ENCODE measurements at regions of chr2 and their contacts with region 1.

Region 1: GRCh38 chr2:136207030-136207623 is 89.2 kb upstream of the CXCR4 start:
- DNase-seq: peak; percentile 68
- ATAC-seq: peak; percentile 79
- H3K4me3 ChIP-seq: no peak overlapping the region
- H3K27ac ChIP-seq: no peak overlapping the region
- H3K4me1 ChIP-seq: peaks cover 21% of the 10 kb centered on the region
- H3K27me3 ChIP-seq: no peaks in the 10 kb centered on the region; a peak in 1 of 4 replicates
- CTCF ChIP-seq: no peak
- EP300 ChIP-seq: peak; percentile 26 to 55; a peak in 2 of 4 replicates
- POLR2A ChIP-seq: no peak
- RAD21 ChIP-seq: 0 out of 2 replicates have a peak, but pooled peaks have one; percentile 0

Region 2: GRCh38 chr2:135904341-135904989 is 302.7 kb before region 1 on chr2:
- CTCF ChIA-PET with region 1: no interaction called
- POLR2A ChIA-PET with region 1: no interaction called
- RAD21 ChIA-PET with region 1: no interaction called
- SMC1A ChIA-PET with region 1: no interaction called
- in situ Hi-C with region 1: no loop called
- intact Hi-C with region 1: no loop called
- DNase-seq: no peak
- ATAC-seq: no peak; the same call in 2 of the 3 replicates
- H3K4me3 ChIP-seq: no peak overlapping the region
- H3K27ac ChIP-seq: no peak overlapping the region
- H3K4me1 ChIP-seq: no peaks in the 10 kb centered on the region
- H3K27me3 ChIP-seq: no peaks in the 10 kb centered on the region
- CTCF ChIP-seq: no peak
- EP300 ChIP-seq: no peak
- POLR2A ChIP-seq: no peak
- RAD21 ChIP-seq: no peak

Region 3: GRCh38 chr2:136117909-136118818 is 89.0 kb before region 1 on chr2 and contains the start of gene CXCR4:
- CTCF ChIA-PET with region 1: no interaction called
- POLR2A ChIA-PET with region 1: interaction called, 8 read pairs
- RAD21 ChIA-PET with region 1: interaction called, 16 read pairs
- SMC1A ChIA-PET with region 1: interaction called, 9 read pairs
- in situ Hi-C with region 1: no loop called
- intact Hi-C with region 1: loop called (anchors 5 kb)
- DNase-seq: no peak
- ATAC-seq: peak; percentile 43
- H3K4me3 ChIP-seq: peak within 1 kb of the TSS; percentile 85
- H3K27ac ChIP-seq: peak within 1 kb of the TSS; percentile 40; the same call in 1 of the 2 replicates
- H3K4me1 ChIP-seq: peaks cover 2% of the 10 kb centered on the region; the same call in 1 of the 2 replicates
- H3K27me3 ChIP-seq: peaks cover 0 to 12% of the 10 kb centered on the region in 2 experiments
- CTCF ChIP-seq: peak in 1 of 3 experiments; percentile 19; a peak in 1 of 6 replicates
- EP300 ChIP-seq: no peak
- POLR2A ChIP-seq: peak; percentile 97
- RAD21 ChIP-seq: 0 out of 2 replicates have a peak, but pooled peaks have one; percentile 9
- polyA plus RNA-seq, gene CXCR4: 31.1 to 32.3 TPM

Region 4: GRCh38 chr2:136225950-136226835 is 19.1 kb after region 1 on chr2:
- CTCF ChIA-PET with region 1: no interaction called
- POLR2A ChIA-PET with region 1: interaction called, 5 read pairs
- RAD21 ChIA-PET with region 1: interaction called, 19 read pairs
- SMC1A ChIA-PET with region 1: interaction called, 47 read pairs
- in situ Hi-C with region 1: no loop called
- intact Hi-C with region 1: no loop called
- DNase-seq: no peak
- ATAC-seq: peak; percentile 93
- H3K4me3 ChIP-seq: no peak overlapping the region
- H3K27ac ChIP-seq: no peak overlapping the region
- H3K4me1 ChIP-seq: no peaks in the 10 kb centered on the region; the same call in 1 of the 2 replicates
- H3K27me3 ChIP-seq: no peaks in the 10 kb centered on the region
- CTCF ChIP-seq: peak in 1 of 3 experiments; percentile 7; a peak in 1 of 6 replicates
- EP300 ChIP-seq: peak; percentile 96 to 97
- POLR2A ChIP-seq: no peak
- RAD21 ChIP-seq: 0 out of 2 replicates have a peak, but pooled peaks have one; percentile 3

Region 5: DNA sequence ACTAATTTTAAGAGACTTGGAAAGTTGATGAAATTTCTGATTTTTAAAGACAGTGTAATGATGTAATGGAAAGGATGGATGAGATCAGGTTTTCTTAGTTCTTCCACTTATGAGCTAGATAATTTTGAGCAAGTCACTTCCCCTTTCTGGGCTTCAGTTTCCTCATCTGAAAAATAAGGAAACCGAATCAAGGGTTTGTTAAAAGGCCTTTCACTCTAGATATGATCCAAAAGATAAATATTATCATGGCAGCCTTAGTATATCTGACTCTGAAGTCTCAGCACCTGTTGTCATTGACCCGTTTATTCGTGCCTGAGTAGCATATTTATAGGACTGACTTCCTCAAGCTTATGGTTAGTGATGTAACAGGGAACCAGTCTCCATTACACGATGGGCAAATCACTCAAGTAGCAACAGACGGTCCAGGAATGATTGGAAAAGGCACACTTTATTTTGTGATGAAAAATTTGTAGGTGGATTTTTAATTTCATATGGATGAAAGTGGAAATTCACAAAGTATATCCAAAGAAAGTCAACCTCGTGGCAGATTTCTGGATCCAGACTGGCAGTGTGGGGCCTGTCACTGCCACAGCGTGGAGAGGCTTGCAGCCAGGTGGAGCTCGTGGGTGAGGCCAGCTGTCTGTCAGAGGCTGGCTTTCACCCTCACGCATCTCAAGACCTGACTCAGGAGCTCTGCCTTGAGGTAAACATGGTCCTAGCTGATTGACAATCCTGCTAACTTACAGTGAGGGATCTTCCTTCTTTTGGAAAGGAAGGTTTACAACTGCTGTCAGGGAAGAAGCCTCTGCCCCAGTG is 48.7 kb after region 1 on chr2:
- CTCF ChIA-PET with region 1: interaction called, 11 read pairs
- POLR2A ChIA-PET with region 1: interaction called, 19 read pairs
- RAD21 ChIA-PET with region 1: interaction called, 69 read pairs
- SMC1A ChIA-PET with region 1: interaction called, 55 read pairs
- in situ Hi-C with region 1: no loop called
- intact Hi-C with region 1: loop called (anchors 2 kb)
- DNase-seq: no peak
- ATAC-seq: peak; percentile 78
- H3K4me3 ChIP-seq: no peak overlapping the region
- H3K27ac ChIP-seq: no peak overlapping the region
- H3K4me1 ChIP-seq: peaks cover 12% of the 10 kb centered on the region
- H3K27me3 ChIP-seq: no peaks in the 10 kb centered on the region; a peak in 1 of 4 replicates
- CTCF ChIP-seq: peak in 2 of 3 experiments; percentile 9 to 27; a peak in 3 of 6 replicates
- EP300 ChIP-seq: peak in 1 of 2 experiments; percentile 63; a peak in 1 of 4 replicates
- POLR2A ChIP-seq: no peak
- RAD21 ChIP-seq: no peak

Region 6: GRCh38 chr2:136319237-136319636 is 112.1 kb after region 1 on chr2:
- CTCF ChIA-PET with region 1: interaction called, 3 read pairs
- POLR2A ChIA-PET with region 1: interaction called, 4 read pairs
- RAD21 ChIA-PET with region 1: interaction called, 4 read pairs
- SMC1A ChIA-PET with region 1: interaction called, 12 read pairs
- in situ Hi-C with region 1: no loop called
- intact Hi-C with region 1: no loop called
- DNase-seq: no peak
- ATAC-seq: peak; percentile 81
- H3K4me3 ChIP-seq: no peak overlapping the region
- H3K27ac ChIP-seq: no peak overlapping the region
- H3K4me1 ChIP-seq: peaks cover 5% of the 10 kb centered on the region; the same call in 1 of the 2 replicates
- H3K27me3 ChIP-seq: no peaks in the 10 kb centered on the region
- CTCF ChIP-seq: no peak
- EP300 ChIP-seq: no peak
- POLR2A ChIP-seq: no peak
- RAD21 ChIP-seq: no peak

Region 7: DNA sequence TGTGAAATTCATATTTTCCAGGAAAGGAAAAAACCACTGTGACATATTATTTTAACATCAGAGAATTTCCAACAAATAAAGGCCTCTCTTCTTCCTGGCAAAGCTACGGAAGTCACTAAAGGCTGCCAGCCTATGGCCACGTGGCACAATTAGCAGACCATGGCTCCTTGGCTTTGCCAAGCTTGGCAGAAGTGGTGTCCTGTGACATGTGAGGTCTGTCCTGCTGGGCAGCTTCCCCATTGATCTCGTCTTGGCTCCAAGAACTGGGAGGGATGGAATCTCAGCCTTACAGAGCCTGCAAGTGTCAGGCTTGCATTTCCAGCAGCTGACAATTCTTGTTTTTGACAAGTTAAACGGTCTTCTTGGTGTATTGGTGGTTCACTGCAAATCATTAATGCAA is 331.4 kb after region 1 on chr2:
- CTCF ChIA-PET with region 1: no interaction called
- POLR2A ChIA-PET with region 1: no interaction called
- RAD21 ChIA-PET with region 1: no interaction called
- SMC1A ChIA-PET with region 1: no interaction called
- in situ Hi-C with region 1: no loop called
- intact Hi-C with region 1: no loop called
- DNase-seq: no peak
- ATAC-seq: no peak
- H3K4me3 ChIP-seq: no peak overlapping the region
- H3K27ac ChIP-seq: no peak overlapping the region
- H3K4me1 ChIP-seq: no peaks in the 10 kb centered on the region
- H3K27me3 ChIP-seq: no peaks in the 10 kb centered on the region; a peak in 1 of 4 replicates
- CTCF ChIP-seq: no peak
- EP300 ChIP-seq: no peak
- POLR2A ChIP-seq: no peak
- RAD21 ChIP-seq: no peak

Region 8: DNA sequence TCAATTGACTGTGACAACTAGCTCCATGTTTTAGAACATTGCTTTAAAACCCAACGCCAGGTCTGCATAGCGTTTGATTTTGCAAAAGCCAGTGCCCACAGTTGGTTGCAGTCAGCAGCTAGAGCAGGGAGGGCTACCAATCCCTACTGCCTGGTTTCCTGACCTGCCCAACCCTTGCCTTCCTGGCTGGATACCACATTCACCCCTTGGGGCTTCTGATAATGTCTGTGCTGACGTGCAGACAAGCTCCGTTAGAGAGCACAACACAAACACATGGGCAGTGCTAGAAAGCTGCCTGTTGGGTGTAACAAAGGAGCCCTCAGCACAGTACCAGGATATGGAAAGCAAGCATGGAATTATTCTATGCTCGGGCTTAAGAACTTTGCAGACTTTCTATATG is 486.8 kb after region 1 on chr2:
- CTCF ChIA-PET with region 1: no interaction called
- POLR2A ChIA-PET with region 1: no interaction called
- RAD21 ChIA-PET with region 1: no interaction called
- SMC1A ChIA-PET with region 1: no interaction called
- in situ Hi-C with region 1: no loop called
- intact Hi-C with region 1: no loop called
- DNase-seq: no peak
- ATAC-seq: no peak
- H3K4me3 ChIP-seq: no peak overlapping the region
- H3K27ac ChIP-seq: no peak overlapping the region
- H3K4me1 ChIP-seq: no peaks in the 10 kb centered on the region
- H3K27me3 ChIP-seq: no peaks in the 10 kb centered on the region
- CTCF ChIP-seq: no peak
- EP300 ChIP-seq: no peak
- POLR2A ChIP-seq: no peak
- RAD21 ChIP-seq: no peak

Region 9: DNA sequence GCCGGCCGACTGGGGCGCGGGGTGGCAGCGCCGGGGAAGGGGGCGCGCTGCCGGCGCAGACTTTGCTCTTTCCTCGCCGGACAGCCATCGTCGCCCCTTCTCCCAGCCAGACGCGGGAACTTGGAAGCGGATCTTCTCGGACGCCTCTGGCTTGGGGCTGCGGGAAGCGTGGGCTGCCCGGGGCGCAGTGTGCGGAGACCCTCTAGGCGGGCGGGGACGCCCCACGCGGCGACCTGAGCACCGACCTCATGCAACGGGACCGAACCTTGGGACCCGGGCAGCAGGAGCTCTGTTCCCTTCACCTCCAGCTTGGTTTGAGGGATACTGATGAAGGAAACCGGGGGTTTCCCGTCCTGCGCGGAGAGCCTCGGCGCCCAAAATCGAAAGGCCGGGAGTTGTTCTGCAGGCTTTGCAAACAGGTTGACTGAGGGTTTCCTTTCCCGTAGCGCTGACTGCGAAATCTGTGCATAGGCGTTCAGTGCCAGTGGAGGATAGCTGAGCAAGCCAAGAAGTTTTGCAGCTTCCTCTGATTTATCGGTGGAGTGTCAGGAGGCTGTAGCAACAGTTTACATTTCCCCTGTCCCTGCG is 558.7 kb after region 1 on chr2:
- CTCF ChIA-PET with region 1: no interaction called
- POLR2A ChIA-PET with region 1: no interaction called
- RAD21 ChIA-PET with region 1: no interaction called
- SMC1A ChIA-PET with region 1: no interaction called
- in situ Hi-C with region 1: no loop called
- intact Hi-C with region 1: no loop called
- DNase-seq: no peak
- ATAC-seq: peak; percentile 34; the same call in 2 of the 3 replicates
- H3K4me3 ChIP-seq: no peak overlapping the region
- H3K27ac ChIP-seq: no peak overlapping the region
- H3K4me1 ChIP-seq: no peaks in the 10 kb centered on the region
- H3K27me3 ChIP-seq: peaks cover 9 to 18% of the 10 kb centered on the region in 2 experiments
- CTCF ChIP-seq: no peak
- EP300 ChIP-seq: no peak
- POLR2A ChIP-seq: no peak
- RAD21 ChIP-seq: no peak

Measured in GM12878 (cell line).